ENCODE measurements at regions of chr7 and their contacts with region 1.

Region 1: GRCh38 chr7:120792091-120792860 is 65.7 kb downstream of the TSPAN12 start:
- DNase-seq: peak; percentile 77

Region 2: GRCh38 chr7:120703585-120704240 is 88.6 kb before region 1 on chr7:
- CTCF ChIA-PET with region 1: no interaction called
- POLR2A ChIA-PET with region 1: no interaction called
- DNase-seq: no peak

Region 3: GRCh38 chr7:120805636-120806388 is 13.5 kb after region 1 on chr7:
- CTCF ChIA-PET with region 1: interaction called, 15 read pairs
- POLR2A ChIA-PET with region 1: no interaction called
- DNase-seq: peak; percentile 63

Region 4: DNA sequence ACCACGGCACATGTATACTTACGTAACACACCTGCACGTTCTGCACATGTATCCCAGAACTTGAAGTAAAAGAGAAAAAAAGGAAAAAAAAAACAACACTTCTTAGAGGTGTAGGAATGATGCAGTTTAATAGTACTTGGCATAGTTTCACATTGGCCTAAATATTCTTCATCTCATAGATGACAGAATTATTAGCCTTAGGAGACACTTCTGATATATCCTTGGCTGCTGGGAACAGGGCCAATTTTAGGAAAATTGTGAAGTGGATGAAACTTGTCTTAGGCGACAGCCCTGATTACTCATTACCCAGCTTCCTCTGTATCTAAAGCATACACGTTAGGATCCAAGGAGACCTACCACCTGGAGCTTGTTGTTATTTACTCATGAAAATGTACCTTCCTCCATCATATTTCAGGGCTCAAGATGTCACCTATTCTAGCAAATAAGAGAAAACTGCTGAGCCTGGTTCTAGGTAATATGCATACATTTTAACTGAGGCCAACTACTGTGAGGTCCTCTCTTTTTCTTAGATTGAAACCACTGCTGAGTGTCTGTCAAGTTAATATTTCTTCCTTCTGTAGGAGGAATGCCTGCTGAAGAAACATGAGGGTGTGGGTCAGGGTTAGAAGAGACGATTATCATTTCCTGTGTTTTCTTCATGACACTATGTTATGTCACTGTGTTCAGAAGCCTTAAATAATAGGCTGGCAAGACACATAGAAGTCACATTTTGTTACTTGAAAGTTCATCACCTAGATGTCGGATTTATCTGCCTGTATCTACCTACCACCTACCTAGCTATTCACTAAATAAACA is 240.6 kb after region 1 on chr7:
- CTCF ChIA-PET with region 1: no interaction called
- POLR2A ChIA-PET with region 1: no interaction called
- DNase-seq: no peak

Measured in HEK293T (cell line).